ENCODE measurements at regions of chr12 and their contacts with region 1.

Region 1: DNA sequence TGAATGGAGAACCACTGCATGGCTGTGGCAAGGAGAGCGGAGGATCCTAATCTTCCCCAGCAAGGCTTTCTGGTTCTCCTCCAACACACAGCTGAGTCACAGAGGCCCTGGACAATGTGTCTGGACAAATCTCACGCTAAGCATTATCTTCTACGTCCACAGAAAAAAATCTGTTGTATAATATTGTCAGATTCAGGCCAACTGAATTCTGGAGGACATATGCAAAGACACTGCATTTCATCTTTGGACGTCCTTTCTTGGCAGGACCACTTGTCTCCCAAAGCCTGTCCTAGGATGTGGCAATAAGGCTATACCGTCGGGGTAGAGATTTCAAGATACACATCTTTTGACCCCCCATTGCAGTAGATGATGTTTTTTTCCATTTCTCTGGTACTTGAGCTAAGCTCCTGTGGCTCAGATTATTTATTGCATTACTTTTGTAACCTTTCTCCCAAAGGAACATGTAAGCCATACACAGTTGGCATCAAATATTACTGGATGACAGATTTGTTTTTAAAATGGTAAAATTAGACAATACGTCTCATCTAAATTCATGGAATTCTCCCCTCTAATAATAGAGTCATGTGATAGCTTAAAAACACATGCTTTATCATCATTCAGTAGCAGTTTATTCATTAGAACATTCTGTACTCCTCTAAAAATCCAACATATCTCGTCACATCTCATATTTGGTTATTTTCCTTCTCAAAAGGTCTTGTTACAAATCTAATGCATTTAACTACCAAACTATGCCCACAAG is 19.4 kb downstream of the LMO3 start:
- DNase-seq: no peak
- H3K4me3 ChIP-seq: peak overlapping the region in 1 of 2 donors; percentile 35
- H3K27ac ChIP-seq: peak overlapping the region; percentile 38 to 45
- H3K4me1 ChIP-seq: no peaks in the 10 kb centered on the region
- H3K27me3 ChIP-seq: no peaks in the 10 kb centered on the region
- CTCF ChIP-seq: no peak

Region 2: DNA sequence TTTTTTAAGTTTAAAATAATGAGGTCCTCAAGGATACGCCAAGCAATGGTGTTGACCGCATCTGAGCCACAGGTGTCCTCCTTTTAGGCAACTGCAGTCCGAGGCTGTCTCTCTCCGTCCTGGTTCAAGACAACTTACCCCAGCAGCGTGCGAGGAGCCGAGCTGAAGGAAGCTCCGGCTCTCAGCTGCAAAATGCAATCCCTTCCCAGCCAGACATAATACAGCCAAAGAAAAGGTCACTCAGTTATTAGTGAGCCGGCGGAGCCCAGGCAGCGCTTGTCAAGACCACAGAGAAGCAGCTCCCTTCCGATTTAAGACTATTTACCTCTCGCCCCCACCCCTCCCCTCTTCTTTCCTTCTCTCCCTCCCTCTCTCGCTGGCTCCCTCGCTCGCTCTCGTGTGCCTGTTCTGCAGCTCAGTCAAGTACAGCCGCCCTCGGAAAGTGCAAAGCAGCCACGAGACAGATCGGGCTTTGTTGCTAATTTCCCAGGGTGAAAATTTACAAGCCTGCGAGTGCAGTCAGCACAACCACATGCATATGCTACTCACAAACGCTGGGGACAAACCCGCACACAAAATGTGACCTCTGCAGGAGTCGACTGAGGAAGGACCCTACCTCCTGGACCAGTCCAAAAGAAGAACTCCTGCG is 19.8 kb after region 1 on chr12:
- intact Hi-C with region 1: loop called (anchors 2 kb)
- DNase-seq: no peak
- H3K4me3 ChIP-seq: peak overlapping the region; percentile 63 to 67
- H3K27ac ChIP-seq: peak overlapping the region; percentile 59 to 83
- H3K4me1 ChIP-seq: peaks cover 0 to 7% of the 10 kb centered on the region in 2 donors
- H3K27me3 ChIP-seq: no peaks in the 10 kb centered on the region
- CTCF ChIP-seq: no peak